Activated B cell treated with CpG ODN at 0.5 μM for 24 hours (primary cell): ENCODE measurements at regions of chr2 and their contacts with region 1.

Region 1: GRCh38 chr2:43977677-43978375 is 18.0 kb downstream of the LRPPRC start:
- DNase-seq: no peak
- ATAC-seq: no peak
- H3K4me3 Mint-ChIP-seq: no peak overlapping the region
- H3K27ac Mint-ChIP-seq: no peak overlapping the region
- H3K4me1 Mint-ChIP-seq: no peaks in the 10 kb centered on the region
- H3K27me3 Mint-ChIP-seq: no peaks in the 10 kb centered on the region
- CTCF ChIP-seq: no peak

Region 2: GRCh38 chr2:43114210-43114609 is 863.6 kb before region 1 on chr2:
- CTCF ChIA-PET with region 1: no interaction called
- POLR2A ChIA-PET with region 1: no interaction called
- intact Hi-C with region 1: no loop called
- DNase-seq: no peak
- ATAC-seq: no peak
- H3K4me3 Mint-ChIP-seq: no peak overlapping the region
- H3K27ac Mint-ChIP-seq: no peak overlapping the region
- H3K4me1 Mint-ChIP-seq: peaks cover 13% of the 10 kb centered on the region
- H3K27me3 Mint-ChIP-seq: no peaks in the 10 kb centered on the region
- CTCF ChIP-seq: no peak

Region 3: DNA sequence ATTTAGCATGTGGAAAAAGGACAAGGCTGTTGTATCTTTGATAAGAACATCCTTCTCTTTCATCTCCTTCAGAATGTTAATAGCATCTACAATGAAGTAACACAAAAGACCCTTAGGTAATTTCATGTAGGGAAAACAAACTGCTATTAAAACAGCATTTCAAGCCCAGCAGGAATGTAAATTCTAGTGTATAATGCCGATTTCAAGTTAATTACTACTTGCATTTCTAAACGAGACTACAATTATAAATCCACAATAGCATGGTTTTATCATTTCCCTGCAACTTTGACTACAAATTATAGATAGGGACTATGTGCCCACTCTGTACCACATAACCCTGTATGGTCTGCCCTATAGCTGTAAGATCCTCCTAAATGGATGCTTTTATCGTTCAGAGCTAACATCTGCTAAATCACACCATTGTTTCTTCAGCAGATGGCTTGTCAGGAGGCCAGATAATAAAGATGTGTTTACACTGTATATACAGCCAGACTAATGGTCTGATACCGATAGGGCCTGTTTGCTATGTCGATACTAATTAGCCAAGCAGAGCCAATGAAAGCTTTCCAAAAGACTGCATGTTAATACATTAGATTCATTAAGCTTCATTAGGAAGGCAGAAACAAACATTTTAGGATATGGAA is 33.9 kb before region 1 on chr2:
- CTCF ChIA-PET with region 1: no interaction called
- POLR2A ChIA-PET with region 1: no interaction called
- intact Hi-C with region 1: loop called (anchors 5 kb)
- DNase-seq: no peak
- ATAC-seq: no peak
- H3K4me3 Mint-ChIP-seq: no peak overlapping the region
- H3K27ac Mint-ChIP-seq: no peak overlapping the region
- H3K4me1 Mint-ChIP-seq: no peaks in the 10 kb centered on the region
- H3K27me3 Mint-ChIP-seq: no peaks in the 10 kb centered on the region
- CTCF ChIP-seq: no peak

Region 4: DNA sequence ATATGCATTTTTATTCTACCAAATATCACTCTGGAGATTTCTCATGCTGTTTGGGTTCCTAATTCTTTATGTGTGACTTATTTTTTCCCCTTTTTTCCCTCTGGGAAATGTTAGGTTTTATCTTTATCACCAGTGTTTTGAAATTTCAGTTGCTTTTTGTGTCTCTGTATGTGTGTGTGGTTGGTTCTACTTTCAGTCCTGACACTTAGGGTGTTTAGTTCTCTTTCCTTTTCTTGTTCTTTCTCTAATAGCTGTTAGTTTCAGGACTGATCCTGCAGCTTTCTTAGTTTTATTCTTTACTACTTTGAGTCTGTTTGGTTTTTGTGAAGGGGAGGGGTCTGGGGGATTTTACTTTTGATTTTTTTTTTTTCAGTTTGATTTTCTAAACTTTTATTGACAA is 213.9 kb after region 1 on chr2:
- CTCF ChIA-PET with region 1: no interaction called
- POLR2A ChIA-PET with region 1: no interaction called
- intact Hi-C with region 1: no loop called
- DNase-seq: no peak
- ATAC-seq: no peak
- H3K4me3 Mint-ChIP-seq: peak overlapping the region; percentile 32
- H3K27ac Mint-ChIP-seq: peak overlapping the region; percentile 50
- H3K4me1 Mint-ChIP-seq: peaks cover 72% of the 10 kb centered on the region
- H3K27me3 Mint-ChIP-seq: no peaks in the 10 kb centered on the region
- CTCF ChIP-seq: no peak